Activated CD8-positive, alpha-beta T cell treated with anti-CD3 and anti-CD28 coated beads, Interleukin-2, amount 10 ng/mL, durations not matched to agents 7 days and 5 days (primary cell): ENCODE measurements at regions of chr2 and their contacts with region 1.

Region 1: GRCh38 chr2:203814661-203815540 is 52.7 kb upstream of the CTLA4 start:
- DNase-seq: peak; percentile 68
- ATAC-seq: peak; percentile 72
- H3K4me3 Mint-ChIP-seq: peak overlapping the region; percentile 34
- H3K27ac Mint-ChIP-seq: no peak overlapping the region
- H3K4me1 Mint-ChIP-seq: peaks cover 49% of the 10 kb centered on the region
- H3K27me3 Mint-ChIP-seq: peaks cover 7% of the 10 kb centered on the region

Region 2: GRCh38 chr2:203225423-203226039 is 589.4 kb before region 1 on chr2:
- CTCF ChIA-PET with region 1: interaction called, 12 read pairs
- POLR2A ChIA-PET with region 1: no interaction called
- DNase-seq: peak; percentile 44
- ATAC-seq: peak; percentile 69
- H3K4me3 Mint-ChIP-seq: no peak overlapping the region
- H3K27ac Mint-ChIP-seq: no peak overlapping the region
- H3K4me1 Mint-ChIP-seq: no peaks in the 10 kb centered on the region
- H3K27me3 Mint-ChIP-seq: peaks cover 2% of the 10 kb centered on the region

Region 3: GRCh38 chr2:203650860-203651613 is 163.9 kb before region 1 on chr2:
- CTCF ChIA-PET with region 1: interaction called, 13 read pairs
- POLR2A ChIA-PET with region 1: no interaction called
- DNase-seq: no peak
- ATAC-seq: peak; percentile 64
- H3K4me3 Mint-ChIP-seq: no peak overlapping the region
- H3K27ac Mint-ChIP-seq: no peak overlapping the region
- H3K4me1 Mint-ChIP-seq: peaks cover 6% of the 10 kb centered on the region
- H3K27me3 Mint-ChIP-seq: no peaks in the 10 kb centered on the region

Region 4: DNA sequence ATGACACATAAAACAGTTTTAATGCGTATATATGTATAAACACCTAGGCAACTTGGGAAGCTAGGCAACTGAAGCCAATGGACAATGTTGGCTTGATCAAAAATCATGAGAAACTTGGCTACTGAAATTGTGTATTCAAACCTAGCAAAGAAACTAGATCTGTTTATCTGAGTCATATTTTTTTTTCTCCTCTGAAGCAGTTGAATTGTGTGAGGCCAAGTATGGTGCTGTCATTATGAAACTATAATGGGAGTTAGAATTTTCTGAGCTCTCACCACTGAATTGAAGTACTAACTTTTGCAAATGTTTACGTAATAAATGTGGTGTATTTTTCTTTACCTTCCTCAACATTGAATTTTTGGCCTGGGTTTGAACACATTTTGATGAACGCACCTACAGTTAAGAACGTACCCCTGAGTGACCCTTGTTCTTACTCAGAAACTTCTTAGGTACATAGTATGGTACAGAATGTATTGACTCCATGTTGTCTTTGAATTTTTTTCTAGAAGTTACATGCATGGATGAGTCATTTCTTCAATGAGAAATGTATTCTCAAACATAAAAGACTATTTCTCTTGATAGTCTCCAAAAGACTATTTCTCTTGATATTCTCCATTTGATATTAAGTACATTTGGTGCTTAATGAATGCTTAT is 84.7 kb before region 1 on chr2:
- CTCF ChIA-PET with region 1: interaction called, 17 read pairs
- POLR2A ChIA-PET with region 1: interaction called, 3 read pairs
- DNase-seq: no peak
- ATAC-seq: peak; percentile 55
- H3K4me3 Mint-ChIP-seq: no peak overlapping the region
- H3K27ac Mint-ChIP-seq: peak overlapping the region; percentile 72
- H3K4me1 Mint-ChIP-seq: peaks cover 81% of the 10 kb centered on the region
- H3K27me3 Mint-ChIP-seq: no peaks in the 10 kb centered on the region

Region 5: GRCh38 chr2:203782262-203782976 is 32.5 kb before region 1 on chr2:
- CTCF ChIA-PET with region 1: interaction called, 38 read pairs
- POLR2A ChIA-PET with region 1: interaction called, 4 read pairs
- DNase-seq: peak; percentile 72
- ATAC-seq: peak; percentile 90
- H3K4me3 Mint-ChIP-seq: no peak overlapping the region
- H3K27ac Mint-ChIP-seq: peak overlapping the region; percentile 44
- H3K4me1 Mint-ChIP-seq: peaks cover 62% of the 10 kb centered on the region
- H3K27me3 Mint-ChIP-seq: no peaks in the 10 kb centered on the region

Region 6: DNA sequence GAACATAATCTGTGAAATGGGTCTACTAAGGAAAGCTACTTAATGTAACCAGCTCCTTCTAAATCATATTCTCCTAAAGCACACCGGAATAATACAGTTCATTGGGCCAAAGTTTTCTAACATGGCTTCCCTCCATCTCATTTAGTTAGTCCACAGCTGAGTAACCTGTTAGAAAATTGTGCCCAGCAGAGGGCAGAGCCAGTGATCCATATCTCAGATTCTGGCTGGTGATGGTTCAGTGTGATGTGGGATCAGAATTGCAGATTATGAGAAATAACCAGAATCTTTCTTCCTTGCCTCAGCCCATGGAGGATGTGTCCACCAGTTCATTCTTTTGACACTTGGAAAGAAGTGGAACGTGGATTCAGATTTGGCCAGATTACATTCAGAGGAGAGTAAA is 43.3 kb after region 1 on chr2:
- CTCF ChIA-PET with region 1: interaction called, 11 read pairs
- POLR2A ChIA-PET with region 1: no interaction called
- DNase-seq: no peak
- ATAC-seq: peak; percentile 56
- H3K4me3 Mint-ChIP-seq: no peak overlapping the region
- H3K27ac Mint-ChIP-seq: no peak overlapping the region
- H3K4me1 Mint-ChIP-seq: peaks cover 56% of the 10 kb centered on the region
- H3K27me3 Mint-ChIP-seq: no peaks in the 10 kb centered on the region

Region 7: GRCh38 chr2:204090021-204090420 is 275.1 kb after region 1 on chr2:
- CTCF ChIA-PET with region 1: no interaction called
- POLR2A ChIA-PET with region 1: no interaction called
- DNase-seq: no peak
- ATAC-seq: no peak
- H3K4me3 Mint-ChIP-seq: no peak overlapping the region
- H3K27ac Mint-ChIP-seq: no peak overlapping the region
- H3K4me1 Mint-ChIP-seq: no peaks in the 10 kb centered on the region
- H3K27me3 Mint-ChIP-seq: peaks cover 5% of the 10 kb centered on the region